T-cell (primary cell): ENCODE measurements at regions of chr6 and their contacts with region 1.

Region 1: GRCh38 chr6:137283940-137284810 is 65.0 kb upstream of the IFNGR1 start:
- DNase-seq: no peak
- ATAC-seq: no peak
- H3K4me3 ChIP-seq: no peak overlapping the region
- H3K4me3 Mint-ChIP-seq: no peak overlapping the region
- H3K27ac ChIP-seq: no peak overlapping the region
- H3K27ac Mint-ChIP-seq: no peak overlapping the region
- H3K4me1 ChIP-seq: no peaks in the 10 kb centered on the region
- H3K4me1 Mint-ChIP-seq: peaks cover 0 to 11% (median 7%) of the 10 kb centered on the region in 3 donors
- H3K27me3 ChIP-seq: peaks cover 0 to 6% of the 10 kb centered on the region in 2 experiments
- H3K27me3 Mint-ChIP-seq: peaks cover 26 to 27% of the 10 kb centered on the region in 2 donors

Region 2: DNA sequence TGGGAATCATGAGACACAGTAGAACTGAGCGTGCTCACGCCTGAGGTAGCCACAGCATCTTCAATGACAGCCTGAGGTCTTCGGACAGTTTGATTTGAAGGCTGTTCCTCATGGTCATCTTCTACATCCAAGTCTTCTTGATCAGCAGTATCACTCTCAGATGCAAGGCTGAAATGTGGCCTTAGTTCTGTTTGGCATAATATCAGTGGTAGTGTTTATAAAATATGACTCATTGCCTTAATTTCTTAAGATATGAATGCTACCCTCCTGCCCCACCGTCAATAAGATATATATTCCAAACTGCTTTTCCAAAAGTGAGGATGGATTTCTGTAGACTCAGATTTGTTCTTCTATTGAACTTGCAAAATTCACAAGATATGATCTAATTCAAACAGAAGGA is 716.5 kb before region 1 on chr6:
- CTCF ChIA-PET with region 1: no interaction called
- POLR2A ChIA-PET with region 1: no interaction called
- DNase-seq: no peak
- ATAC-seq: no peak
- H3K4me3 ChIP-seq: no peak overlapping the region
- H3K4me3 Mint-ChIP-seq: no peak overlapping the region
- H3K27ac ChIP-seq: no peak overlapping the region
- H3K27ac Mint-ChIP-seq: no peak overlapping the region
- H3K4me1 ChIP-seq: peaks cover 0 to 4% of the 10 kb centered on the region in 2 experiments
- H3K4me1 Mint-ChIP-seq: peaks cover 8 to 22% (median 12%) of the 10 kb centered on the region in 3 donors
- H3K27me3 ChIP-seq: no peaks in the 10 kb centered on the region
- H3K27me3 Mint-ChIP-seq: no peaks in the 10 kb centered on the region

Region 3: GRCh38 chr6:137370871-137371633 is 86.9 kb after region 1 on chr6:
- CTCF ChIA-PET with region 1: no interaction called
- POLR2A ChIA-PET with region 1: no interaction called
- DNase-seq: no peak
- ATAC-seq: no peak
- H3K4me3 ChIP-seq: no peak overlapping the region
- H3K4me3 Mint-ChIP-seq: no peak overlapping the region
- H3K27ac ChIP-seq: no peak overlapping the region
- H3K27ac Mint-ChIP-seq: peak overlapping the region in 1 of 2 donors; percentile 16
- H3K4me1 ChIP-seq: peaks cover 0 to 2% of the 10 kb centered on the region in 2 experiments
- H3K4me1 Mint-ChIP-seq: peaks cover 3 to 18% (median 6%) of the 10 kb centered on the region in 3 donors
- H3K27me3 ChIP-seq: no peaks in the 10 kb centered on the region
- H3K27me3 Mint-ChIP-seq: no peaks in the 10 kb centered on the region

Region 4: GRCh38 chr6:138622967-138623366 is 1338.8 kb after region 1 on chr6:
- CTCF ChIA-PET with region 1: no interaction called
- POLR2A ChIA-PET with region 1: interaction called in 1 of 2 experiments, 10 read pairs
- DNase-seq: no peak
- ATAC-seq: no peak
- H3K4me3 ChIP-seq: no peak overlapping the region
- H3K4me3 Mint-ChIP-seq: no peak overlapping the region
- H3K27ac ChIP-seq: no peak overlapping the region
- H3K27ac Mint-ChIP-seq: no peak overlapping the region
- H3K4me1 ChIP-seq: no peaks in the 10 kb centered on the region
- H3K4me1 Mint-ChIP-seq: no peaks in the 10 kb centered on the region
- H3K27me3 ChIP-seq: no peaks in the 10 kb centered on the region
- H3K27me3 Mint-ChIP-seq: no peaks in the 10 kb centered on the region